ENCODE measurements at regions of chr17 and their contacts with region 1.

Region 1: GRCh38 chr17:19744922-19745757 is 3.0 kb downstream of the ALDH3A1 start:
- DNase-seq: peak; percentile 73 to 74 (median 74)
- H3K4me3 ChIP-seq: peak overlapping the region in 2 of 3 experiments; percentile 15 to 68
- H3K4me3 Mint-ChIP-seq: peak overlapping the region; percentile 78 to 86
- H3K27ac ChIP-seq: no peak overlapping the region
- H3K27ac Mint-ChIP-seq: peak overlapping the region in 1 of 7 donors; percentile 12
- H3K4me1 ChIP-seq: peaks cover 8 to 9% of the 10 kb centered on the region in 2 donors
- H3K4me1 Mint-ChIP-seq: peaks cover 9% of the 10 kb centered on the region
- H3K27me3 ChIP-seq: no peaks in the 10 kb centered on the region
- H3K27me3 Mint-ChIP-seq: peaks cover 8 to 13% (median 8%) of the 10 kb centered on the region in 3 donors
- CTCF ChIP-seq: peak; percentile 98

Region 2: DNA sequence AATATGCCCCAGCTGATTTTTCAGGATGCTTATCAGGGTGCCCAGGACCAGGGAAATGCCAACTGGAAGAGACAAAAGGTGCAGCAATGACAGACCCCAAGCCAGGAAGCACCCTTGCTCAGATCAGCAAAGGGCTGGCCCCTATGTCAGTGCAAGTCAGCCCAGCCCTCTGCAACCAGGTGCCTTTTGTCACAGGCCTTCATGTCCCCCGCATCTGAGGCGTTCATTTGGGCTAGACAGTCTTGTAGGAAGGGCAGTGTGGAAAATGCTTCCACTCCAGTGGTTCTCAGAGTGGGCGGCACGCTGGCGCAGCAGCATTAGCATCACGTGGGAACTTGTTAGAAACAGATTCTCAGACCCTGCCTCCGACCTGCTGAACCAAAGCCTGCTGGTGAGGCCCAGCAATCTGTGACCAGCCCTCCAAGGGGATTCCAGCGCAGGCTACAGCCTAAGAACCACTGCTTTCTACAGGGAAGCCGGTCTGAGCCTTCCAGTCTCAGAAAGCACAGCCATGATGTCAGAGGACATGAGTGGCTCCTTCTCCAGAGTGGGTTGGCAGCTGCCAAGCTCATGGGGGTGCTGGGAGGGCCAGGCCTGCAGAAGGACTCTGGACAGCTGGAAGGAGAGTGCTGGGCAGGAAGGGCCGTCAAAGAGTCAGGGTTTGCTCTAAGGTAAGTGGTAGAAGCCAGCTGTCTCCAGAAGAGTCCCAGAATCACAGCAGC is 41.9 kb before region 1 on chr17:
- intact Hi-C with region 1: loop called in 1 of 2 experiments (anchors 5 kb)
- DNase-seq: no peak
- H3K4me3 ChIP-seq: no peak overlapping the region
- H3K4me3 Mint-ChIP-seq: no peak overlapping the region
- H3K27ac ChIP-seq: no peak overlapping the region
- H3K27ac Mint-ChIP-seq: no peak overlapping the region
- H3K4me1 ChIP-seq: peaks cover 8% of the 10 kb centered on the region in 2 donors
- H3K4me1 Mint-ChIP-seq: peaks cover 13% of the 10 kb centered on the region
- H3K27me3 ChIP-seq: no peaks in the 10 kb centered on the region
- H3K27me3 Mint-ChIP-seq: peaks cover 0 to 2% (median 0%) of the 10 kb centered on the region in 3 donors
- CTCF ChIP-seq: no peak

Region 3: DNA sequence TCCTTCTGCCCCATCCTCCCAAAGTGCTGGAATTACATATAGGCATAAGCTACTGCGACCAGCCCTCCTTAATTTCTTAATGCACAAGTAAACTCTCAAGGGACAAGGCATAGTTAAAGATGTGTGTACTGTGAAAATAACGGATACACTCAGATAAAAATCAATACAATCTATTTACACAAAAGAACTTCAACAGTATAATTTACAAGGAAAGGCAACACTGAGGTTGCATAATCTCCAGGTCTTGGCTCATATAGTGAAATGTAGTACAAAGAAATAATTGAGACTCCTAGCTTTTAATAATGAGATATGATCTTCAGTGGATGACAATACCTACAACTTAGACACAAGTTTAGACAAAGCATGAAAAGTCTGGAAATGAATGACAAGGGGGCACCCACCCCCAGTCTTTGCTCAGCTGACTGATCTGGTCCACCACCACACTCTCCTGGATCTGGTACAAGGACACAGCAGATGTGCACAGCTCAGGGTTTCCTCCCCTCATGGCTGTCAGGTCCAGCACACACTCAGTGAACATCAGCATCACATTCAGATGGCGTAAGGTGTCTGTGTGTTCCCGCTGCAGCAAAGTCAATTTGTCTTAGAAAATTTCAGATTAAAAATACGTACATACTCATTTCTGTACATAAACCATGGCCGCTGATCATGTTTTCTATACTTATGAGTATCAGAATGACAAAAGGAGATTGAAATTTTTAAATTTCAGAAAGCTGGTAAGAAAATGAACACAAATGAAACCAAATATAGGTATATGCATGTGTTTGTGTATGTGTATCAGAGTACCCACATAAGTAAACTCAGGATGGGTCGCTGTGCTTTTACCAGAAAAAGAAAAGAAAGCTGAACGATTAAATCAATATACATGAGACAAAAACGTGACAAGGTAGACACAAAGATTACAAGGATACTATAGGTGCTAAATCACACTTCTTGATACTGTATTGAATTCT is 36.6 kb after region 1 on chr17:
- intact Hi-C with region 1: no loop called
- DNase-seq: no peak
- H3K4me3 ChIP-seq: no peak overlapping the region
- H3K4me3 Mint-ChIP-seq: no peak overlapping the region
- H3K27ac ChIP-seq: no peak overlapping the region
- H3K27ac Mint-ChIP-seq: no peak overlapping the region
- H3K4me1 ChIP-seq: no peaks in the 10 kb centered on the region
- H3K4me1 Mint-ChIP-seq: no peaks in the 10 kb centered on the region
- H3K27me3 ChIP-seq: no peaks in the 10 kb centered on the region
- H3K27me3 Mint-ChIP-seq: peaks cover 0 to 2% (median 0%) of the 10 kb centered on the region in 3 donors
- CTCF ChIP-seq: no peak